ENCODE measurements at regions of chr11 and their contacts with region 1.

Region 1: GRCh38 chr11:122101625-122102291 is 14.3 kb downstream of the BLID start:
- DNase-seq: peak; percentile 79
- ATAC-seq: peak; percentile 92

Region 2: DNA sequence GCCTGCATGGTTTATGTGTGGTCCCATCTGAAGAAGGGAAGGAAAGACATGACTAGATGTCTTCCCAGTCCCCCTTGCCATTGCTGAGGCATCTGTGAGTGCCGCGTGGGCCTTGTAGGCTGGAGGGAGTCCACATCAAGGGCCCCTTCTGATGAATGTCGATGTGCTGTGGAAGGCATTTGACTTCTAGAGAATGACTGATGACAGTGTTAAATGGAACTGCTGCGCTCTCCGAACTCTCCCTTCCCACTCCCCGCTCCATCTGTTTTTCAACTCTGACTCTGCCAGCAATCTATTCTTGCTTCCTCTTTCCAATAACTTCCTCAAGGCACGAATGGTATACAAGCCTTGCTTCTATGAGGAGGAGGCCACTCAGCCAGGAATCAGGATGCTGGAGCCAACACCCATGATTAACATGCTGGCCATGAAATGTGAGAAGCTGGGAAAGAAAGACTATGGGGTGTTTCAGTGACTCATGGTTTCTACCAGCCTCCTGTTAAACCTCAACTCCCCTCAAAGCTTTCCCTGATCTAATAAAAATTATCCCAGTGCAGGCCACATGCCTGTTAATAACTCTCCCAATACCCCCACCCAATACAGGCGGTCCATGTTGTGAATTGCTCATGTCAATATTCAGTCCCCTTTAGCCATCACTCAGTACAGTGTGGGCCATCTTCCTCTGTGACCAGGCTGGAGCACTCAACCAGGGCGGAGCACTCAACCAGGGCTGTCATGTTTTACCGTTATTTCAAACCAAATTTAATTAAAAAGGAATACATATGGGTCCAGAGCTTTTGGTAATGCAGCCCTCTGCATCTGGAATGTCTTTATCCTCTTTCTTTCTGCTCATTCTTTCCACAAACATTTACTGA is 1124.3 kb before region 1 on chr11:
- intact Hi-C with region 1: no loop called
- DNase-seq: no peak
- ATAC-seq: no peak

Region 3: DNA sequence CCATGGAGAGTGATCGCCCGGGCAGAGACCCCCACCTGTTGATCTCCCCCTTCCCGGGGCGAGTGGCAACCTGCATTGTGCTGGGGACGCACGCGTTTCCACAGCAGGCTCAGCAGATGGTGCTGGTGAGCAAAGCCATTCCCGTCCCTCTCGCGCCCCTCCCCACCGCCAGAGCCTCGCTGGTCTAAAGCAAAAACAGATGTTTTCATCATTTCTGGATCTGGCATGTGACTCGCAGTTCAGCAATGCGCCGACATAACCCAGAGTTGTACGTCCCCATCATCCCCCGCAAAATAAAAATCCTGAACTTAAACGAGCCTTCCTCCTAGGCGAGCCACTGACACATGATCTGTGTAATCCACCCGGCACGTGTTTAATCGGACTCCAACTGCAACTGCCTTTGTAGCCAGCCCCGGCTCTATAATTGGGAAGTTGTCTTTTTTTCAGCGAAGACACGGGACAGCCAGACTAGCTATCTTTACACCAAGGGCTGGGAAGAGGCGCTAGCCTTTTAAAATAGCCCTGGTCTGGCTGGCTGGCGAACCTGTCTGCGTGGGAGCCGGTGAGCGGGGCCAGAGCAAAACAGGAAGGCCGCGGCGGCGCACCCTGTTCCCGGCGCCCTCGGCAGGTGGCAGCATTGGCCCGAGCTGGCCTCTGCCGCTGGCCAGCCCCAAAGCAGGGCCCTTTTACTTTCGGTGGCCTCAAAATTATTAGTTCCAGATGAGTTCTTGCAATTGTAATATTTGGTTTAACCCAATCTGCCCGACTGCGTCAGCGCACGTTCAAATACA is 446.0 kb before region 1 on chr11:
- intact Hi-C with region 1: loop called (anchors 5 kb)
- DNase-seq: peak; percentile 93
- ATAC-seq: peak; percentile 95

Region 4: GRCh38 chr11:122020902-122021301 is 80.9 kb before region 1 on chr11:
- intact Hi-C with region 1: loop called (anchors 10 kb)
- DNase-seq: no peak
- ATAC-seq: no peak

Region 5: DNA sequence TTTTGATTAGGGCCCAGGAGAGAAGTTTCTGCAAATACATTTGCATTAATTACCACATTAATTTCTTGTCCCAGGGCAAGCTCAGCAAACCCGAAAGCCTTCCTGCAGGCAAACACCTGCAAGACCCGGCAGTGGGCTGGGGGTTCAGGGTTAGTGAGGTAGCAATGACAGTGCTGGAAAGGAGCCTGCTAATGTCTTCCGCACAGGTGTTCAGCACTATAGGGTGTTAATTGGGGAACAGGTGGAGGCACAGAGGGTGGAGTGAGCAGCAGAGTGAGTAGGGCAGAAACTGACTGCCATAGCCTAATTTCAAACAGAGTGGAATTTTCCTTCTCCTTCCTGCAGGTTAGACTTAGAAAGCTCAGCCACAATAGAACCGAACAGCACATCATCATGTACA is 502.9 kb after region 1 on chr11:
- intact Hi-C with region 1: no loop called
- DNase-seq: no peak
- ATAC-seq: no peak